AG04449 (cell line): ENCODE measurements at regions of chr1 and their contacts with region 1.

Region 1: GRCh38 chr1:210448297-210448892 is 119.7 kb downstream of the HHAT start:
- DNase-seq: peak; percentile 33
- H3K4me3 ChIP-seq: no peak overlapping the region
- CTCF ChIP-seq: peak; percentile 54

Region 2: GRCh38 chr1:210400043-210400840 is 48.2 kb before region 1 on chr1:
- CTCF ChIA-PET with region 1: interaction called, 121 read pairs
- POLR2A ChIA-PET with region 1: no interaction called
- DNase-seq: peak; percentile 38
- H3K4me3 ChIP-seq: no peak overlapping the region
- CTCF ChIP-seq: peak; percentile 86

Region 3: DNA sequence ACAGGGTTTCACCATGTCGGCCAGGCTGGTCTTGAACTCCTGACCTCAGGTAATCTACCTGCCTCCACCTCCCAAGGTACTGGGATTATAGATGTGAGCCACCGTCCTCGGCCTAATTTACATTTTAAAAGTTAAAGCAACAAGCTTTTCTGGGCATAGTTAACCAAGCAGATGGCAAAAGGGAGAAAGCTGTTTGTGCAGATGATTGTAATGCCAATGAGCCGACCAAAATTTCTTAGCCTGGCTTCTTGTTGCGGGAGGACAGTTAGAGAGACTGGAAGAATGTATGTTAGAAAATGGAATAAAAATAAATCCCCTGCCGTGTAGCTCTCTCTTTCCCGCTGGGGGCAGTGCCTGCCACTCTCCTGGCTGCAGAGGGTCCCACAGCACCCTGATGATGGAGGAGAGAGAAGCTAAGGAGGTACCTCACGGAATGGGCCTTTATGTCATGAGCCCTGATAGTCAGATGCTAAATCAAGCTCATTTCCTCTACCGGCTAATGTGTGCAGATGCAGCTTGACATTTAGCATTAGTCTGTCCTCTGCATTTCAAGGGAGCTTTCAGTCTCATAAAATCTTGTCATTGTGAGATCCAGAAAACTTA is 32.4 kb before region 1 on chr1:
- CTCF ChIA-PET with region 1: interaction called, 65 read pairs
- POLR2A ChIA-PET with region 1: no interaction called
- DNase-seq: no peak
- H3K4me3 ChIP-seq: no peak overlapping the region
- CTCF ChIP-seq: no peak

Region 4: DNA sequence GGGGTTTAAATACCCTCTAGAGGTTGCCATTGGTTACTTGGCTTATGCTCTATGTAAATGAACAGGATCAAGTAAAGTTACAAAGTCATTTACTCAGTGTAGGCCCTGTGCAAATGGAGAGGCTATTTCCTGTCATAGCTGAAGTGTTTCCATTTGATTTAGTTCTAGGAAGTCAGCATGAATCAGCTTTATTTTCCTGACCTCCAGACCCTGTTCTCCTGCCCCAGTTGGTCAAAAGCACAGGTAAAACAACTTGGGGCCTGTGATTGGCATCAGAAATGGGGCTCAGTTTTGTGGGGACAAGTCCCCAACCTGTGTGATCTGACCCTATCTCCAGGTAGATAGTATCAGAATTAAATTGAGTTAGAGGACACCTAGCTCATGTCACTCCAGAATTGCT is 120.2 kb after region 1 on chr1:
- CTCF ChIA-PET with region 1: interaction called, 22 read pairs
- POLR2A ChIA-PET with region 1: no interaction called
- DNase-seq: no peak
- H3K4me3 ChIP-seq: no peak overlapping the region
- CTCF ChIP-seq: no peak

Region 5: DNA sequence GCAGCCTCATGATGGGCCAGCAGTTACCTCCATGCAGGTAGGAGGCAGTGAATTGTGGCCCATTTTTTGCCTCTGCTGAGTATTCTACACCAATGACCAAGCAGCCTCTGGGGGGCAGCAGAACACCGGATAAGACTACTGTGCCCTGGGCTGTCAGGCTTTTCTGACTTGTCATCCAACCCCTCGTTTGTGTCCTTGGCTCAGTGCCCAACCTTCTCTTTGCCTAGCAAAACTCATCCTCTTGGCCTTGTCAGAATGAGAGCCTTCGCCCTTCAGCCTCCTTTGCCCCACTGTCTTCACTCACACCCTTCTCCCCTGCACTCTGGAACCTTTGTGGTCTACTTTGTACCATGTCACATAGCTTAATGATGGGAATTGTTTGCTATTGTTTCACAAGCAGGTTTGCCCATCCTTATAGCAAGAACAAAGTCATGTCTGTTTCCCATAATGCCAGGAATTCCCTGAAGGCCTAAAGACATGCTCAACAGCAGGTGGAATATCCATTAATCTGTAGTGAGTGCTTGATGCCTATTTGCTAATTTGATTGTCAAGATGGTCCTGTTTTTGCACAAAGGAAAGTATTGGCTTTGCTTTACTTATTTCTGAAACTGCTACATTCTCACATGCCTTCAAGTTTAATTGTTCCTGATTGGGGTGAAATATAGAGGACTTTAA is 136.2 kb after region 1 on chr1:
- CTCF ChIA-PET with region 1: interaction called, 126 read pairs
- POLR2A ChIA-PET with region 1: no interaction called
- DNase-seq: no peak
- H3K4me3 ChIP-seq: no peak overlapping the region
- CTCF ChIP-seq: peak; percentile 82

Region 6: GRCh38 chr1:210597555-210598134 is 149.2 kb after region 1 on chr1:
- CTCF ChIA-PET with region 1: interaction called, 21 read pairs
- POLR2A ChIA-PET with region 1: no interaction called
- DNase-seq: peak; percentile 86
- H3K4me3 ChIP-seq: no peak overlapping the region
- CTCF ChIP-seq: no peak

Region 7: GRCh38 chr1:210739627-210740026 is 291.2 kb after region 1 on chr1:
- CTCF ChIA-PET with region 1: no interaction called
- POLR2A ChIA-PET with region 1: no interaction called
- DNase-seq: no peak
- H3K4me3 ChIP-seq: no peak overlapping the region
- CTCF ChIP-seq: no peak

Region 8: DNA sequence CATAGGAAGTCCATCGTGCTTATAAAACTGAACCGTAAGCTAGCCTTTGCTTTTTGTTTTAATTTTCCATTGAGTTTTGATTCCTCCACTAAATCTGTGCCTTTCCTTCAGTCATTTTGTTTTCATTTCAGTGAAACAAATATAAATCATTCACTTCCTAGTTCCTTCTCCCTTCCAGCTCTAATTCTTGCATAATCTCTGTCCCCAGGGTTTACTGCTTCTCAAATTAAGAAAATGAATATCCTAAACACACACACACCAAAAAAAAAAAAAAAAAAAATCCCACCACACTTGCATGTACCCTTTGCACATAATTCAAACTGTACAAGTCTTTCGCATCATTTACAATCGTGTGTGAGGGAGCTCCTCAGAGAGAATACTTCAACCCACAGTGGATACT is 678.8 kb after region 1 on chr1:
- CTCF ChIA-PET with region 1: interaction called, 403 read pairs
- POLR2A ChIA-PET with region 1: no interaction called
- DNase-seq: no peak
- H3K4me3 ChIP-seq: no peak overlapping the region
- CTCF ChIP-seq: no peak